ENCODE measurements at regions of chr7 and their contacts with region 1.

Region 1: DNA sequence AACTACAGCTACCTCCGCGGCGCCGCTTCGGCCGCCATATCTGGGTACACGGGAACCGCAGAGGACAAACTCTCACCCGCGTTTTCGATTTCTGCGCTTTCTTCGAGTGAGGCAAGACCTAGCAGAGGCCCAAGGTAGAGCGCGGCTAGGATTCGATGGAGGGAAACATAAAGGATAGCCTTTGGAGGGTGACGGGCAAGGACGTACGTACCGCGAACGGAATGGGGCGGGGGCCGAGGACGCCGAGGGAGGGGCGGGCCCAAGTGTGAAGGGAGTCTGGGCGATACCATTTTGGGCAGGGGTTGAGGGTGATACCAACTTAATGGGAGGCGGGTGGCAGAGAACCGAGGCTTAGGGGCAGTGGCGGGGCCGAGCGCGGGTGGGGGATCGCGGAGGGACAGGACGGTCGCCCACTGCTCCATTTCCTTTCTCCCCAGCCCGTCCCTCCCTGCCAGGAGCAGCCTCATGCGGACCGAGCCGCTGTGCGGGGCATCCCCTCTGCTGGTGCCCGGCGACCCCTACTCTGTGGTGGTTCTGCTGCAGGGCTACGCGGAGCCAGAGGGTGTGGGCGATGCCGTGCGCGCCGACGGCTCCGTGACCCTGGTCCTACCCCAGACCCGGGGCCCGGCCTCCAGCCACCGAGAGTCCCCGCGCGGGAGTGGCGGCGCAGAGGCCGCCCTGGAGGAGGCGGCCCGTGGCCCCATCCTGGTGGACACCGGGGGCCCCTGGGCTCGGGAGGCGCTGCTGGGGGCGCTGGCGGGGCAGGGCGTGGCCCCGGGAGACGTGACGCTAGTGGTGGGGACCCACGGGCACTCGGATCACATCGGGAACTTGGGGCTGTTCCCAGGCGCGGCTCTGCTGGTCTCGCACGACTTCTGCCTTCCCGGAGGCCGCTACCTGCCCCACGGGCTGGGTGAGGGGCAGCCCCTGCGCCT is at the start of gene MBLAC1:
- DNase-seq: peak; percentile 87 to 97 (median 91)
- ATAC-seq: peak; percentile 80
- H3K4me3 ChIP-seq: peak within 1 kb of the TSS; percentile 96
- H3K4me3 Mint-ChIP-seq: peak within 1 kb of the TSS; percentile 100
- H3K27ac ChIP-seq: peak within 1 kb of the TSS; percentile 96 to 99
- H3K27ac Mint-ChIP-seq: peak within 1 kb of the TSS; percentile 100
- H3K4me1 ChIP-seq: peaks cover 39% of the 10 kb centered on the region
- H3K4me1 Mint-ChIP-seq: peaks cover 31% of the 10 kb centered on the region
- H3K27me3 ChIP-seq: no peaks in the 10 kb centered on the region
- H3K27me3 Mint-ChIP-seq: no peaks in the 10 kb centered on the region
- CTCF ChIP-seq: no peak
- total RNA-seq, gene MBLAC1: 3.7 to 4.4 TPM

Region 2: DNA sequence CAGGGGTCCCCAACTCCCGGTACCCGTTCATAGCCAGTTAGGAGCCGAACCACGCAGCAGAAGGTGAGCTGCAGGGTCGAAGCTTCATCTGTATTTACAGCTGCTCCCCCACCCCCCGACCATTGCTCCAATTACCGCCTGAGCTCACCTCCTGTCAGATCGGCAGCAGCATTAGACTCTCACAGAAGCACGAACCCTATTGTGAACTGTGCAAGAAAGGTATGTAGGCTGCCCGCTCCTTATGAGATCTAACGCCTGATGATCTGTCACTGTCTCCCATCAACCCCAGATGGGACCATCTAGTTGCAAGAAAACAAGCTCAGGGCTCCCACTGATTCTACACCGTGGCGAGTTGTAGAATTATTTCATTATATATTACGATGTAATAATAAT is 136.7 kb before region 1 on chr7:
- CTCF ChIA-PET with region 1: interaction called, 4 read pairs
- POLR2A ChIA-PET with region 1: interaction called, 3 read pairs
- intact Hi-C with region 1: loop called (anchors 1 to 2 kb)
- DNase-seq: no peak
- ATAC-seq: no peak
- H3K4me3 ChIP-seq: no peak overlapping the region
- H3K4me3 Mint-ChIP-seq: no peak overlapping the region
- H3K27ac ChIP-seq: no peak overlapping the region
- H3K27ac Mint-ChIP-seq: no peak overlapping the region
- H3K4me1 ChIP-seq: peaks cover 12% of the 10 kb centered on the region
- H3K4me1 Mint-ChIP-seq: peaks cover 5% of the 10 kb centered on the region
- H3K27me3 ChIP-seq: no peaks in the 10 kb centered on the region
- H3K27me3 Mint-ChIP-seq: no peaks in the 10 kb centered on the region
- CTCF ChIP-seq: no peak